Ovary (tissue), 10 donors: ENCODE measurements at regions of chr4 and their contacts with region 1.

Region 1: DNA sequence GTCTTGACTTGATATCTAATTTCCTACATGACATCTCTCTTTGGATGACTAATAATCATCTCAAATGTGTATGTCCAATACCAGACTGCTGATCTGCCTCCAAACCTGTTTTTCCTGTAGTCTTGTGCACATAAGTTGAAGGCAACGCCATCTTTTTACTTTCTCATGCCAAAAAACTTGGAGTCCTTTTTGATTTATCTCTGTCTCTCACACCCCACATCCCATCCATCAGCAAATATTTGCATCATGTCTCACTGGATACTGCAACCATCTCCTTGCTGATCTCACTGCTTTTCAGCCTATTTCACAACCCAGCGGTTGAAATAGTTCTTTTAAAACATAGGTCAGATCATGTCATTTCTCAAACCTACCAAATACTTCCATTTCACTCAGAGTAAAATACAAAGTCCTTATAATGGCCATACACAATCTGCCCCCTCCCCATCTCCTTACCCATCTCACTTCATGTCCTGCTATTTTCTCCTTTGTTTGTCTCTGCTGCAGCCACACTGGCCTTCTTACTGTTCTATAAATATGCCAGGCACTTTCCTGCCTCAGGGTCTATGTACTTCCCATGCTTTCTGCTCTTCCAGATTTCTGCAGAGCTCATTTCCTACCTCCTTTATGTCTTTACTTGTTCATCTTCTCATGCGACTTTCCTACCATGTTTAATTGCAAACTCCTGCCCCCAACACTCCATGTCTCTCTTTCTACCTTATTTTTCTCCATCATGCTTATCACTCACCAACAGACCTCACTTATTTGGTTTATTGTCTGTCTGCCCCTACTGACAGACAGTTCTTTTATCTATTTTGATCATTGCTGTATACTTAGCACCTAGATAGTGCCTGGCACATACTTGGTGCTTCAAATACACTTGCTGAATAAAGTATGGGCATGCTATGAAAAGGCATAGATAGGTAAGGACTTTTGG is 98.8 kb downstream of the ANXA3 start:
- DNase-seq: no peak
- H3K4me3 ChIP-seq: no peak overlapping the region
- H3K27ac ChIP-seq: no peak overlapping the region
- H3K4me1 ChIP-seq: peaks cover 2% of the 10 kb centered on the region
- H3K27me3 ChIP-seq: no peaks in the 10 kb centered on the region
- CTCF ChIP-seq: no peak
- EP300 ChIP-seq: no peak
- POLR2A ChIP-seq: no peak

Region 2: DNA sequence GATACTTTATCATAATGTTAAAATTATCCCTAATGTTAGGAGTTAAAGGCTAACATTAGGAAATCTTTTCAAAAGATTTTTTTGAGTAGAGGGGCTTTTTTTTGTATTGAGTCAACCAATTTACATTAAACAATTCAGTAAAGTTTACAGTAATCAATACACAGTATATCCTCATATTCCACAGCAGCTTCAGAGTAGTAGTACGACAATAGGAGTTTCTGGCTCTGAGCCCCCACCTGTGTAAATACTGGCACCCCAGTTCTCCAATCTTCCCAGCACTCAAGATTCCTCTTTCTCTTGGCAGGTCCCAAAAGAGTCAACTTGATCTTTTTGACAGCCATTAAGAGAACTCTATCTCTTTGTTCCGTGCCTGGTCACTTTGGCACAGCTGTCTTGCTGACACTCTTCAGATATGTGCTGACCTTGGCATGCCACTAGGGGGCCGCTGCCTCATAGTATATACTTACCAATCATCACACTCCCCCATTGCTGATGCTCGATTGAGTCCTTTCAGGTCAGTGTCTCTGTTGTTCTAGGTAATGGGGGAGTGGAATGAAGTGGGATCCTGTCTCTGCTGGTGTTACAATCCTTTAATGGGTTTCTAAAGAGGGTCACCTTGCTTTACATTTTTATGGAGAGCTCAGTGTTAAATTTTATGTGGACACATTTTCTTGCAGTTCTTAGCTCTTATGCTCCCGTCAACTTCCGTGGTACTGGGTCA is 1555.1 kb before region 1 on chr4:
- intact Hi-C with region 1: loop called in 1 of 4 experiments (anchors 5 kb)
- DNase-seq: peak; percentile 20 to 61 (median 47)
- H3K4me3 ChIP-seq: no peak overlapping the region
- H3K27ac ChIP-seq: no peak overlapping the region
- H3K4me1 ChIP-seq: no peaks in the 10 kb centered on the region
- H3K27me3 ChIP-seq: no peaks in the 10 kb centered on the region
- CTCF ChIP-seq: peak in 2 of 3 donors; percentile 19 to 37
- EP300 ChIP-seq: no peak
- POLR2A ChIP-seq: no peak

Region 3: GRCh38 chr4:78369679-78370078 is 280.7 kb before region 1 on chr4:
- intact Hi-C with region 1: no loop called
- DNase-seq: no peak
- H3K4me3 ChIP-seq: no peak overlapping the region
- H3K27ac ChIP-seq: no peak overlapping the region
- H3K4me1 ChIP-seq: no peaks in the 10 kb centered on the region
- H3K27me3 ChIP-seq: no peaks in the 10 kb centered on the region
- CTCF ChIP-seq: no peak
- EP300 ChIP-seq: no peak
- POLR2A ChIP-seq: no peak

Region 4: DNA sequence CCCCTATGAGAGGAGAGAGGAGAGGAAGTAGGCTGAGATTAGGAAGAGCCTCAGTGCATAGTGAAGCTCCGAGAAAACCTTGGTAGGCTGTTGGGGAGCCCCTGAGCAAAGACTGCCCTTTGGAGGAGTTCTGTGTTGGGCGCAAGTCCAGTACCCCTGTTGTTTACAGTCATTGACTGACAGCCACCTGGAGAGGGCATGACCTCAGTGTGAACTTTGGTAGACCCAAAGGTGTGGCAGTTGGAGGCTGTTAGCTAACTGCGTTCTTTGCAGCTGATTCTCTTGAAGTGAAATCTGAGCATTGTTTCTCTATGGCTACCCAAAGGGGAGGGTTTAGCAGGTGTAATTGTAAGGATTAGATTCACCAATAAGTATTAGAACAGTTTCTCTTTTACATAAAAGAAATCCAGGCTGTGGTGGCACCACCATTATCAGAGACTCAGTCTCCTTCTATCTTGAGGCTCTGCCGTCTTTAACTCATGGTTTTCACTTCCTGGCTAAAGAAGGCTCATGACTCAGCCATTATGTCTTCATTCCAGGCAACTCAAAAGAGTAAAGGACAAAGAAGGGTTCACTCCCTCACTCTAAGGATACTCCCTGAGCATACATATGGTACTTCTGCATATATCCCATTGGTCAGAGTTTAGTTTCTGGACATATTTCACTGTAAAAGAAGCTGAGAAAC is 65.4 kb before region 1 on chr4:
- intact Hi-C with region 1: no loop called
- DNase-seq: no peak
- H3K4me3 ChIP-seq: no peak overlapping the region
- H3K27ac ChIP-seq: no peak overlapping the region
- H3K4me1 ChIP-seq: no peaks in the 10 kb centered on the region
- H3K27me3 ChIP-seq: no peaks in the 10 kb centered on the region
- CTCF ChIP-seq: no peak
- EP300 ChIP-seq: no peak
- POLR2A ChIP-seq: no peak